ENCODE measurements at regions of chr18 and their contacts with region 1.

Region 1: DNA sequence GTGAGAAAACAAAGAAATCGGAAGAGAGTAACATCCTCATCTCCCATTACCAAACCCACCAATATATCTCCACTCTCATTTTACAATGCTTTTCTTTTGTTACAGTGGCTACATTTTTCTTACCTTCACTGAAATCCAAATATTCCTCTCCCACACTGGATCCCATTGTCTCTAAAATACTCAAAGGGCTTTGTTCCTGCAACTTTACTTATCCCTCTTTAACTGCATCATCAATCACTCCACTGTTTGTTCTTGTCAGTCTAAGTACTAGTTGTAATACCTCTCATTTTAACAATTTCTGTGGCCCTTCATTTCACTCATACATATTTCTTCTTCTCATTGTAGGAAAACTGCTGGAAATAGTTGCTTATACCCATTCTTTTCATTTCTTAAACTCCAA is 464.2 kb upstream of the PIK3C3 start:
- DNase-seq: no peak
- ATAC-seq: no peak
- H3K4me3 ChIP-seq: no peak overlapping the region
- H3K27ac ChIP-seq: no peak overlapping the region
- H3K4me1 ChIP-seq: no peaks in the 10 kb centered on the region
- H3K27me3 ChIP-seq: no peaks in the 10 kb centered on the region
- CTCF ChIP-seq: no peak
- POLR2A ChIP-seq: no peak

Region 2: GRCh38 chr18:41504316-41504715 is 13.5 kb after region 1 on chr18:
- in situ Hi-C with region 1: no loop called
- intact Hi-C with region 1: loop called (anchors 2 kb)
- DNase-seq: no peak
- ATAC-seq: no peak
- H3K4me3 ChIP-seq: no peak overlapping the region
- H3K27ac ChIP-seq: no peak overlapping the region
- H3K4me1 ChIP-seq: no peaks in the 10 kb centered on the region
- H3K27me3 ChIP-seq: no peaks in the 10 kb centered on the region
- CTCF ChIP-seq: no peak
- POLR2A ChIP-seq: no peak

Region 3: GRCh38 chr18:41767960-41768359 is 277.1 kb after region 1 on chr18:
- in situ Hi-C with region 1: no loop called
- intact Hi-C with region 1: no loop called
- DNase-seq: no peak
- ATAC-seq: no peak
- H3K4me3 ChIP-seq: no peak overlapping the region
- H3K27ac ChIP-seq: no peak overlapping the region
- H3K4me1 ChIP-seq: no peaks in the 10 kb centered on the region
- H3K27me3 ChIP-seq: no peaks in the 10 kb centered on the region
- CTCF ChIP-seq: no peak
- POLR2A ChIP-seq: no peak

Measured in gastrocnemius medialis (tissue), 4 donors.